GM12878 (cell line): ENCODE measurements at regions of chr1 and their contacts with region 1.

Region 1: DNA sequence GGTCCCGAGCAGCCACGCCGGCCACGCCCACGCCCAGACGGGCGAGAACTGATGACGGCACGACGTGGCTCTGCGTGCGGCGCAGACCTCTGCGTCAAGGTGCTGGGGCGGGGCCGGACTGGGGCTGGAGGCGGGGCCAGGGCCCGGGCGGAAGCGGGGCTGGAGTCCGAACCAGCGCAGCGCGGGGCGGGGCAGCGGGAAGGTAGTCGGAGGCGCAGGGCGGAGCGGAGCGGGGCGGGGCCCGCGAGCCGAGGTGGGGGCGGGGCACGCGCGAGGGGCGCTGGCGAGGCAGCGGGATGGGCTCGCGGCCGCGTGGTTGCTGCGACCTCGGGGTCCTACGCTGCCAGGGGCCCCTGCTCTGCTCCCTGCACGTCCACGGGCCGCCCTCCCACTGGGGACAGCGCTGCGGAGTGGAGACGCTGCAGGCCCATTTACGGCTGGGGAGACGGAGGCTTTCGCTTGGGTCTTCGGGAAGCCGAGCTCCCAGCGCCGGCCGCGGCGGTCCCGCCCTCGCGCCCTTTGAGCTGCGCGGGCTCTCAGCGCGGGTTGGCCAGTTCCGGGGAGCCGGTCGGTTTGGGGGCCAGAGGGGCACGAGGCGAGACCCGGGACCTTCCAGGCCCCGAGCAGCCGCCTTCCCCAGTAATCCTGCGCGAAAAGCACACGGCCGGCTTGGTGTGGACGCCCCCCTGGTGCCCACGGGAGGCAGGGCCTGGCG is at the start of gene PEX10:
- DNase-seq: peak; percentile 80
- ATAC-seq: peak; percentile 88
- H3K4me3 ChIP-seq: peak within 1 kb of the TSS; percentile 98
- H3K27ac ChIP-seq: peak within 1 kb of the TSS; percentile 62
- H3K4me1 ChIP-seq: peaks cover 27% of the 10 kb centered on the region
- H3K27me3 ChIP-seq: no peaks in the 10 kb centered on the region
- CTCF ChIP-seq: no peak
- EP300 ChIP-seq: no peak
- POLR2A ChIP-seq: peak; percentile 87
- RAD21 ChIP-seq: no peak
- polyA plus RNA-seq, gene PEX10: 0.24 TPM in 1 of 2 experiments, not detected in the other

Region 2: GRCh38 chr1:2290595-2291510 is 121.8 kb before region 1 on chr1:
- CTCF ChIA-PET with region 1: no interaction called
- POLR2A ChIA-PET with region 1: no interaction called
- RAD21 ChIA-PET with region 1: no interaction called
- SMC1A ChIA-PET with region 1: no interaction called
- in situ Hi-C with region 1: no loop called
- intact Hi-C with region 1: no loop called
- DNase-seq: peak; percentile 50
- ATAC-seq: peak; percentile 91
- H3K4me3 ChIP-seq: peak overlapping the region; percentile 59
- H3K27ac ChIP-seq: no peak overlapping the region
- H3K4me1 ChIP-seq: peaks cover 23% of the 10 kb centered on the region
- H3K27me3 ChIP-seq: no peaks in the 10 kb centered on the region
- CTCF ChIP-seq: no peak
- EP300 ChIP-seq: peak in 1 of 2 experiments; percentile 56; a peak in 1 of 4 replicates
- POLR2A ChIP-seq: no peak
- RAD21 ChIP-seq: no peak

Region 3: GRCh38 chr1:2786329-2787162 is 373.9 kb after region 1 on chr1:
- CTCF ChIA-PET with region 1: interaction called, 9 read pairs
- POLR2A ChIA-PET with region 1: no interaction called
- RAD21 ChIA-PET with region 1: interaction called, 3 read pairs
- SMC1A ChIA-PET with region 1: interaction called, 3 read pairs
- in situ Hi-C with region 1: loop called (anchors 10 kb)
- intact Hi-C with region 1: no loop called
- DNase-seq: no peak
- ATAC-seq: peak; percentile 75
- H3K4me3 ChIP-seq: no peak overlapping the region
- H3K27ac ChIP-seq: no peak overlapping the region
- H3K4me1 ChIP-seq: no peaks in the 10 kb centered on the region
- H3K27me3 ChIP-seq: no peaks in the 10 kb centered on the region
- CTCF ChIP-seq: peak; percentile 64 to 80 (median 72)
- EP300 ChIP-seq: no peak
- POLR2A ChIP-seq: no peak
- RAD21 ChIP-seq: peak; percentile 62

Region 4: DNA sequence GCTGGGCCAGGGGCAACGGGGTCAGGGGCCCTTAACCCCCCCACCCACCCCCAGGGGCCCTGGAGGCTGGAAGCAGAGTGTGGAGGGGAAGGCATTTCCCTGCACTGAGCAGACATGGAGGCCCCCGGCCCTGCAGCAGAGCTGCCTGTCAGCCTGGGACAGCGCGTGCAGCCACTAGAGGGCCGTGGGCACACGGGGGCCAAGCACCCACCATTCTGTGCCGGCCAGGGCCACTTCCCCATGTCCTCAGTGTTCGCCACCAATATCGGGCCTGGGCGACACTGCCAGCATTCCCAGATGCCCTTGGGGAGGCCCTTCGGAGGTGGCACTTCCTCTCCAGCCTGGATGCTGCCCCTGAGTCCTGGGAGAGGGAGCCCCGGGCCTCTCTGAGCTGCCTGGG is 1018.6 kb after region 1 on chr1:
- CTCF ChIA-PET with region 1: no interaction called
- POLR2A ChIA-PET with region 1: no interaction called
- RAD21 ChIA-PET with region 1: no interaction called
- SMC1A ChIA-PET with region 1: no interaction called
- in situ Hi-C with region 1: loop called (anchors 5 kb)
- intact Hi-C with region 1: no loop called
- DNase-seq: no peak
- ATAC-seq: peak; percentile 62; the same call in 2 of the 3 replicates
- H3K4me3 ChIP-seq: no peak overlapping the region
- H3K27ac ChIP-seq: no peak overlapping the region
- H3K4me1 ChIP-seq: no peaks in the 10 kb centered on the region
- H3K27me3 ChIP-seq: no peaks in the 10 kb centered on the region
- CTCF ChIP-seq: peak in 1 of 3 experiments; percentile 24; a peak in 1 of 6 replicates
- EP300 ChIP-seq: no peak
- POLR2A ChIP-seq: no peak
- RAD21 ChIP-seq: no peak